ENCODE measurements at regions of chr3 and their contacts with region 1.

Region 1: DNA sequence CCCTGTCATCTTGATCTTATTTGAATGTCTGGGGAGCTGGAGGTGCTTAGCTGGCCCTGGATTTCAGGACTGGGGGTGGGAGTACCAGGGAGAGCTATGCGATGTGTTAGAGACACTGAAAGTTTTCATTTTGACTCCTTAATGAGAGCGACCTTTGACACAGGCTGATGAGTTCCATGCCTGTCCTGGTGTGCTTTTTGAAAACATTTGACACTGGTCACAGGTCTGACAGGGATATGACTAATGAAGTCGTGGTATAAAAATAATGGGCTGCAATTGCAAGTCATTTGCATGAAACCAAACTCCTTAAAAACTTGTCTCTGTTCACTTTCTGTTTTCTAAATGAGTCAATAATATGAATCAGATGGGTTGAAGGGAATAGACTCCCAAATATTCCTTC is 81.9 kb downstream of the MECOM start:
- DNase-seq: no peak
- ATAC-seq: no peak
- H3K4me3 ChIP-seq: no peak overlapping the region
- H3K27ac ChIP-seq: no peak overlapping the region
- H3K4me1 ChIP-seq: no peaks in the 10 kb centered on the region
- H3K27me3 ChIP-seq: no peaks in the 10 kb centered on the region

Region 2: GRCh38 chr3:169619793-169620192 is 38.2 kb after region 1 on chr3:
- intact Hi-C with region 1: loop called in 1 of 2 experiments (anchors 5 kb)
- DNase-seq: no peak
- ATAC-seq: no peak
- H3K4me3 ChIP-seq: no peak overlapping the region
- H3K27ac ChIP-seq: no peak overlapping the region
- H3K4me1 ChIP-seq: peaks cover 2 to 3% of the 10 kb centered on the region in 2 donors
- H3K27me3 ChIP-seq: no peaks in the 10 kb centered on the region